MCF 10A (cell line): ENCODE measurements at regions of chr1 and their contacts with region 1.

Region 1: GRCh38 chr1:232950197-232951176 is at the start of gene NTPCR:
- DNase-seq: peak; percentile 98
- H3K4me3 Mint-ChIP-seq: peak within 1 kb of the TSS; percentile 89
- H3K27ac Mint-ChIP-seq: peak within 1 kb of the TSS; percentile 84
- H3K4me1 Mint-ChIP-seq: peaks cover 37% of the 10 kb centered on the region
- H3K27me3 Mint-ChIP-seq: no peaks in the 10 kb centered on the region
- CTCF ChIP-seq: peak; percentile 20
- total RNA-seq, gene NTPCR: 116 and 129 TPM in 2 replicates

Region 2: DNA sequence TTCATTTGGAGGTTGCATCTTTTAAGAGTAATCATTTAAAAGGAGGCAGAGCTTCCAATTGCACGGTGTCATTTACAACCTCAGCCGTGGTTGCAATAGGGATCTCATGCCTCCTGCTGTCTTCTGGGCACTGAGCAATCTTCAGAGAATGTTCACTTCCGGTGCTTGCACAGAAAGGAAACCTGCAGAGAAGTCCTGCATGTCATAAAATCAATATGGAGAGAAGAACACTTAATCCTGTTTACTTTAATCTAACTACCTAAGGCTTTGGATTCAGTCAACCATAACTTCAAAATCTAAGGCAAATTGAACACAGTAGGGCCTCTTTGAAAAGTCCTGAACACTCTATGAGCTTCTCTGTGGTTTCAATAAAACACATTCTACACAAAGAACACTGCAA is 156.5 kb before region 1 on chr1:
- CTCF ChIA-PET with region 1: interaction called, 4 read pairs
- POLR2A ChIA-PET with region 1: interaction called, 4 read pairs
- intact Hi-C with region 1: loop called (anchors 2 kb)
- DNase-seq: peak; percentile 86
- H3K4me3 Mint-ChIP-seq: no peak overlapping the region
- H3K27ac Mint-ChIP-seq: no peak overlapping the region
- H3K4me1 Mint-ChIP-seq: peaks cover 16% of the 10 kb centered on the region
- H3K27me3 Mint-ChIP-seq: no peaks in the 10 kb centered on the region
- CTCF ChIP-seq: peak; percentile 48

Region 3: GRCh38 chr1:232940262-232940661 is 10.2 kb before region 1 on chr1:
- CTCF ChIA-PET with region 1: interaction called, 8 read pairs
- POLR2A ChIA-PET with region 1: interaction called, 12 read pairs
- intact Hi-C with region 1: no loop called
- DNase-seq: no peak
- H3K4me3 Mint-ChIP-seq: no peak overlapping the region
- H3K27ac Mint-ChIP-seq: no peak overlapping the region
- H3K4me1 Mint-ChIP-seq: peaks cover 12% of the 10 kb centered on the region
- H3K27me3 Mint-ChIP-seq: no peaks in the 10 kb centered on the region
- CTCF ChIP-seq: no peak

Region 4: DNA sequence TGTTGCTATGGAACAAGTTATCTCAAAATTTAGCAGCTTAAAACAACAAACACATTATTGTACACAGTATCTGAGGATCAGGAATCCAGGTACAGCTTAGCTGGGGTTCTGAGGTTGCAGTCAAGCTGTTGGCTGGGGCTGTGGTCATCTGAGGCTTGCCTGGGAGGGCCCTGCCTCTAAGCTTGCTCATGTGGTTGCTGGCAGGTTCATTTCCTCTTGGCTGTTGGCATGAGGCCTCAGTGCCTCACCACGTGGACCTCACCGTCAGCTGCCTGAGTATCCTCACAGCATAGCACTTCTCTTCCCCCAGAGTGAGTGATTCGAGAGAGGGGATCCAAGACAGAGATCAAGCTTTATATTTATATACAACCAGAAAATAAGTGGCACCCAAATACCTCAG is 18.5 kb after region 1 on chr1:
- CTCF ChIA-PET with region 1: interaction called, 11 read pairs
- POLR2A ChIA-PET with region 1: interaction called, 7 read pairs
- intact Hi-C with region 1: no loop called
- DNase-seq: no peak
- H3K4me3 Mint-ChIP-seq: no peak overlapping the region
- H3K27ac Mint-ChIP-seq: peak overlapping the region; percentile 13
- H3K4me1 Mint-ChIP-seq: peaks cover 17% of the 10 kb centered on the region
- H3K27me3 Mint-ChIP-seq: no peaks in the 10 kb centered on the region
- CTCF ChIP-seq: no peak

Region 5: DNA sequence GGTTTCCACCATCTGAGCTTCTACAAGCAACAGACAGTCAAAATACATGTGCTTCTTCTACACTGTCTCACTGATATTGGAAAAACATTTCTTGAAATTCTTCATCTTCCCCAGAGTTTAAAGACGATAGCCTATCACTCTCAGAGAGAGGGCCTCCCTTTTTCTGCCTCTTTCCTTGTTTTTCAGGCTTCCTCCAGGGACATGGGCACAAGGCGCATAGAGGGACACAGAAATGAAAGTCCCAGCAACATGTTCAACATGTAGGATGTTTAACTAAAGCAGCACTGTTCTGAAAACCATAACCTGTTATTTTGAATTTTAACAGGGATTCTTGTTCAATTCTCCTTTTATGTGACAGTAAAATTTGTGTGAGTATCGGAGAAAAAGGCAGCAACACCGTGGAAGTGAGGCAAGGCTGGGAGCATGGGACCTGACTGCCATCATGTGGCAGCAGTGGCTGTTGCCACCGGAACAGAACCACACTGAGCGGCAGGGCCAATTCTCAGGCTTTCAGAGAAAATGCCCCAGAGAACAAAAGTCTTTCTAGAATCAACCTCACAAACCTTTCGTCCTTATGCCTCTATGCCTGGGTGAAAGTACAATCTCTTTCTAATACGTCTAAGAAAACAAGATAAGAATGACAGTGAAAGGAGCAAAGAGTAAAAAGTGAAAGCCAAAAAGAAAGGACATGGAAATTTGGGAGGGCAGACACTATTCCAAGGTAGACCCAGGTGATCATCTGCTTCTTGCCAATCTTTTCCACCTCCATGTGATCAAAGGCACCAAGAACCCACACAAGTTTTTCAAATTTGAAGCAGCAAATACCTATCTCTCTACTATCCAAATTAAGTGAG is 290.6 kb after region 1 on chr1:
- CTCF ChIA-PET with region 1: no interaction called
- POLR2A ChIA-PET with region 1: no interaction called
- intact Hi-C with region 1: loop called (anchors 5 kb)
- DNase-seq: peak; percentile 56
- H3K4me3 Mint-ChIP-seq: no peak overlapping the region
- H3K27ac Mint-ChIP-seq: peak overlapping the region; percentile 32
- H3K4me1 Mint-ChIP-seq: peaks cover 9% of the 10 kb centered on the region
- H3K27me3 Mint-ChIP-seq: no peaks in the 10 kb centered on the region
- CTCF ChIP-seq: peak; percentile 90

Region 6: GRCh38 chr1:234004591-234004990 is 1054.1 kb after region 1 on chr1:
- CTCF ChIA-PET with region 1: no interaction called
- POLR2A ChIA-PET with region 1: no interaction called
- intact Hi-C with region 1: no loop called
- DNase-seq: no peak
- H3K4me3 Mint-ChIP-seq: no peak overlapping the region
- H3K27ac Mint-ChIP-seq: no peak overlapping the region
- H3K4me1 Mint-ChIP-seq: peaks cover 6% of the 10 kb centered on the region
- H3K27me3 Mint-ChIP-seq: no peaks in the 10 kb centered on the region
- CTCF ChIP-seq: no peak